Activated T-helper 2 cell treated with anti-CD3 and anti-CD28 coated beads, Interferon-gamma antibody, Interleukin-2, Interleukin-4, amounts not matched to agents 10 μg/mL and 5 μg/mL and 100 μg/mL, durations not matched to agents 14 hours and 24 hours and 36 hours (primary cell): ENCODE measurements at regions of chr9 and their contacts with region 1.

Region 1: DNA sequence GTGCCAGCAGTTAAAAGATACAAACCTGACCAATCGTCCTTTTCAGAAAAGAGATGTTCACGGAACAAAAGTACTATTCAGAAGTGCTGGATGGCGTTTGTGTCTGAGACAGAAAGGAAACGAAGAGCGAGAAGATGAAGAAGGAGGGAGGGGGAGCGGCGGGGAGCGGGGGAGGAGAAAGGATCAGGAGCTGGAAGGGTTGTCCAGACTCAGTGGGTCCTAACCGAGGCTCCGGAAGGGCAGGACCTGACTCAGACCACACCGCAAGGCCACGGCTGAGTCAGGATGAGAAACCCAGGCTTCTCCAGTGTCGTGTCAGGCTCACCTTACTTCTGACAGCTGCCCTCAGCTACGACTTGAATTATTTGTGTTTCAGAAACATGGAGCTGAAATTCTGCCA is 46.2 kb downstream of the PAX5 start:
- DNase-seq: no peak
- H3K4me3 Mint-ChIP-seq: no peak overlapping the region
- H3K27ac Mint-ChIP-seq: no peak overlapping the region
- H3K4me1 Mint-ChIP-seq: peaks cover 4% of the 10 kb centered on the region
- H3K27me3 Mint-ChIP-seq: peaks cover 60% of the 10 kb centered on the region

Region 2: GRCh38 chr9:37036776-37037502 is 49.0 kb after region 1 on chr9:
- intact Hi-C with region 1: loop called (anchors 5 kb)
- DNase-seq: peak; percentile 40
- H3K4me3 Mint-ChIP-seq: peak overlapping the region; percentile 73
- H3K27ac Mint-ChIP-seq: peak overlapping the region; percentile 33
- H3K4me1 Mint-ChIP-seq: peaks cover 22% of the 10 kb centered on the region
- H3K27me3 Mint-ChIP-seq: peaks cover 84% of the 10 kb centered on the region